ENCODE measurements at regions of chr2 and their contacts with region 1.

Region 1: GRCh38 chr2:86249579-86250391 is 50.5 kb downstream of the MRPL35 start:
- DNase-seq: peak; percentile 52
- ATAC-seq: peak; percentile 93
- H3K4me3 ChIP-seq: no peak overlapping the region
- H3K27ac ChIP-seq: peak overlapping the region; percentile 39; the same call in 1 of the 2 replicates
- H3K4me1 ChIP-seq: peaks cover 15% of the 10 kb centered on the region
- H3K27me3 ChIP-seq: no peaks in the 10 kb centered on the region
- CTCF ChIP-seq: peak; percentile 48 to 67 (median 53); a peak in 5 of 6 replicates
- EP300 ChIP-seq: peak in 1 of 2 experiments; percentile 74; a peak in 2 of 4 replicates
- POLR2A ChIP-seq: no peak
- RAD21 ChIP-seq: peak; percentile 64

Region 2: DNA sequence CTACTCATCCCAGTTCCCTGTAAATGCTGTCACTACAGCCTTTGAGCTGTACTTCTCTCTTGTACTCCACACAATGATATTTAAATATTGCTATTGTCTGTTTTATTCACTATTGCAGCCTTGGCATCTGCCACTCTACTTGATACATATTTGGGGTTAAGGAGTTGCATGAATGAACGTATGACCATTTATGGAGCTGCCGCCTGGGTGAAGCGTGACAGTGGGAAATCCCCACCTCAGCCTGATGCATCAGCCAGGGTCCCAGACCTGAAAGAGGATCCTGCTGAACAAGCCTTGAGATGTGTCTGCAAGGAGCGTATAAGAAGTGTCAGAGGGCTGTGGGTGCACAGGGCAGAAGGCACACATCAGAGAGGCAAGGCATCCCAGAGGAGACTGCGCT is 11.4 kb before region 1 on chr2:
- CTCF ChIA-PET with region 1: interaction called, 6 read pairs
- POLR2A ChIA-PET with region 1: interaction called, 3 read pairs
- RAD21 ChIA-PET with region 1: interaction called, 4 read pairs
- SMC1A ChIA-PET with region 1: interaction called, 11 read pairs
- in situ Hi-C with region 1: no loop called
- intact Hi-C with region 1: no loop called
- DNase-seq: peak; percentile 74
- ATAC-seq: peak; percentile 98
- H3K4me3 ChIP-seq: no peak overlapping the region
- H3K27ac ChIP-seq: no peak overlapping the region
- H3K4me1 ChIP-seq: peaks cover 19% of the 10 kb centered on the region
- H3K27me3 ChIP-seq: no peaks in the 10 kb centered on the region
- CTCF ChIP-seq: no peak
- EP300 ChIP-seq: no peak
- POLR2A ChIP-seq: no peak
- RAD21 ChIP-seq: no peak

Region 3: GRCh38 chr2:86274918-86275275 is 25.1 kb after region 1 on chr2:
- CTCF ChIA-PET with region 1: interaction called, 9 read pairs
- POLR2A ChIA-PET with region 1: no interaction called
- RAD21 ChIA-PET with region 1: interaction called, 14 read pairs
- SMC1A ChIA-PET with region 1: interaction called, 11 read pairs
- in situ Hi-C with region 1: no loop called
- intact Hi-C with region 1: no loop called
- DNase-seq: peak; percentile 60
- ATAC-seq: peak; percentile 90
- H3K4me3 ChIP-seq: no peak overlapping the region
- H3K27ac ChIP-seq: peak overlapping the region; percentile 58
- H3K4me1 ChIP-seq: peaks cover 28% of the 10 kb centered on the region
- H3K27me3 ChIP-seq: no peaks in the 10 kb centered on the region
- CTCF ChIP-seq: no peak
- EP300 ChIP-seq: peak in 1 of 2 experiments; percentile 55; a peak in 2 of 4 replicates
- POLR2A ChIP-seq: no peak
- RAD21 ChIP-seq: no peak

Region 4: GRCh38 chr2:86290596-86291327 is 41.0 kb after region 1 on chr2:
- CTCF ChIA-PET with region 1: interaction called, 41 read pairs
- POLR2A ChIA-PET with region 1: no interaction called
- RAD21 ChIA-PET with region 1: no interaction called
- SMC1A ChIA-PET with region 1: interaction called, 24 read pairs
- in situ Hi-C with region 1: no loop called
- intact Hi-C with region 1: no loop called
- DNase-seq: no peak
- ATAC-seq: no peak
- H3K4me3 ChIP-seq: no peak overlapping the region
- H3K27ac ChIP-seq: no peak overlapping the region
- H3K4me1 ChIP-seq: no peaks in the 10 kb centered on the region
- H3K27me3 ChIP-seq: no peaks in the 10 kb centered on the region; a peak in 1 of 4 replicates
- CTCF ChIP-seq: no peak
- EP300 ChIP-seq: no peak
- POLR2A ChIP-seq: no peak
- RAD21 ChIP-seq: no peak

Region 5: DNA sequence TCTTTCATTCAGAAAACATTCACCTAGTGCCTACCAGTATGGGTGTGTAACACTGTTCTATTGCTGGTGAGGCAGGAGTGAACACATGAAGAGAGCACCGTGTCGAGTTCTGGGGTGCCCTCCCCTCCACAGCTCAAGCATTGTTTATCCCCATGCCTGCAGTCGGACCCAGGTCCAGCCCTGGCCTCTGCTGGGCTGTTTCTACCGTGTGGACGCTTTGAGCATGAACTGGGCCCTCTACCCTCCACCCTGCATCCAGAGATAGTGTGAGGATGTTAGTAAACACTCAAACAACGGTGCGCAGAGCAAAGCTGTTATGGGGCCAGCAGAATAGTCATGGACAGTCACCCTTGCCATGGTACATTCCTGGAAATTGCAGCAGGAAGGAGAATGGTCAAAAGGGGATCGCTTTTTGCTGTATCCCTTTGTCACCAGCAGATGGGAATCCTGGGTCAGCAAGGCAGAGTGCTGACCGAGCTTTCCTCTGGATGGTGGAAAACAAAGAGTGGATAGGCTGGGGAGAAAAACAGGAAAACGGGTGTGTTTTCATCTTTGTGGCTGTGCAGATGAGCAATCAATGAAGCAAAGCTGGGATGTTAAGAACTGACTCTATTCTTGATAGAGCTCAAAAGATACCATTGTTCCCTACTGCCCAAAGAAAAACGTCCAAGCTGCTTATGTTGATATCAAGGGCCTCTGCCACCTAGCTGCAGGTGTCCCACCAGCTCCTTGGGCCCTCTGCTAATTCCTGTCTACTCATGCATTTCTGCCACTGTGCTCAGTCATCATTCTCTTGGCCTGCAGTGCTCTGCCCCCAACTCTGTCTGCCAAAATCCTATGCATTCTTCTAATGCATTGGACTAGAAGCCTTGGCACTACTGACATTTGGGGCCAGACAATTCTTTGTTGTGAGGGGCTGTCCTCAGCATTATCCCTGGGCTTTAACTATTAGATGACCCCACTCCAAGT is 48.9 kb after region 1 on chr2:
- CTCF ChIA-PET with region 1: interaction called, 41 read pairs
- POLR2A ChIA-PET with region 1: no interaction called
- RAD21 ChIA-PET with region 1: interaction called, 7 read pairs
- SMC1A ChIA-PET with region 1: interaction called, 24 read pairs
- in situ Hi-C with region 1: no loop called
- intact Hi-C with region 1: no loop called
- DNase-seq: no peak
- ATAC-seq: no peak; the same call in 2 of the 3 replicates
- H3K4me3 ChIP-seq: no peak overlapping the region
- H3K27ac ChIP-seq: no peak overlapping the region
- H3K4me1 ChIP-seq: no peaks in the 10 kb centered on the region
- H3K27me3 ChIP-seq: no peaks in the 10 kb centered on the region
- CTCF ChIP-seq: 0 out of 6 replicates have a peak, but pooled peaks of 1 of the 3 experiments have one; percentile 10
- EP300 ChIP-seq: no peak
- POLR2A ChIP-seq: no peak
- RAD21 ChIP-seq: no peak

Region 6: DNA sequence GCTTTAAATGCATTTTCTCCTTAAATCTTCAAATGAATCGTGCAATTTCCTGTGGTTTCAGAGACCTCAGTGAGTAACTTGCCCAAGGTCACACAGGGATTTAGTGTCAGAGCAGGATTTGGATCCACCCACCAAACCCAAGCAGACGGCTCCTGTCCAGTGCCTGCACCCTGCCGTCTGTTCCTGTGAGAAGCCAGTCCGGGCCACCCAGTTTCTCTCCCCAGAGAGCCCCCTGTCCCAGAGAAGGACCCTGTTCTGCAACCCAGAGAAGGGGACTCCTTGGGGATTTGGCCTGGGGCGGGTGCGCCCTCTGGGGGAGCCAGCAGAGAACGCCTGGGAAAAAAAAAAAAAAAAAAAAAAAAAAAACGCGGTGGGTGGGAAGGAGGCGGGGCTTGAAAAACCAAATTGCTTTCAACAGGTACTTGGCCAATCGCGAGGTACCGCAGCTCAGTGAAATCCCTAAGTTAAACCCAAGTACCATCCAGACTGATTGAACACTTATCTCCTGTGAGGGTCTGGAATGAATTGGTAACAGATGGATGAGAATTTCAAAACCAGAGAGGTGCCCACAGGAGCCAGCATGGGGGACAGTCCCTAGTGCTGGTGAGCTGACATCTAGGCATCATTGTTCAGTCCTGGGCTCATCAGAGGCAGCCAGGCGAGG is 118.5 kb after region 1 on chr2:
- CTCF ChIA-PET with region 1: interaction called, 11 read pairs
- POLR2A ChIA-PET with region 1: no interaction called
- RAD21 ChIA-PET with region 1: no interaction called
- SMC1A ChIA-PET with region 1: interaction called, 3 read pairs
- in situ Hi-C with region 1: no loop called
- intact Hi-C with region 1: no loop called
- DNase-seq: no peak
- ATAC-seq: peak; percentile 79
- H3K4me3 ChIP-seq: no peak overlapping the region
- H3K27ac ChIP-seq: no peak overlapping the region
- H3K4me1 ChIP-seq: no peaks in the 10 kb centered on the region
- H3K27me3 ChIP-seq: no peaks in the 10 kb centered on the region
- CTCF ChIP-seq: peak; percentile 63 to 67 (median 66)
- EP300 ChIP-seq: no peak
- POLR2A ChIP-seq: no peak
- RAD21 ChIP-seq: peak; percentile 85